Calu3 (cell line): ENCODE measurements at regions of chrX and their contacts with region 1.

Region 1: GRCh38 chrX:17046478-17047097 is 100.1 kb downstream of the REPS2 start:
- DNase-seq: peak; percentile 74
- H3K4me3 Mint-ChIP-seq: no peak overlapping the region
- H3K27ac Mint-ChIP-seq: no peak overlapping the region
- H3K4me1 Mint-ChIP-seq: no peaks in the 10 kb centered on the region
- H3K27me3 Mint-ChIP-seq: no peaks in the 10 kb centered on the region
- CTCF ChIP-seq: peak; percentile 65

Region 2: GRCh38 chrX:16836371-16836770 is 210.2 kb before region 1 on chrX:
- CTCF ChIA-PET with region 1: interaction called, 3 read pairs
- intact Hi-C with region 1: loop called (anchors 5 kb)
- DNase-seq: peak; percentile 57
- H3K4me3 Mint-ChIP-seq: no peak overlapping the region
- H3K27ac Mint-ChIP-seq: peak overlapping the region; percentile 50
- H3K4me1 Mint-ChIP-seq: peaks cover 12% of the 10 kb centered on the region
- H3K27me3 Mint-ChIP-seq: no peaks in the 10 kb centered on the region
- CTCF ChIP-seq: peak; percentile 65

Region 3: GRCh38 chrX:16855363-16856075 is 191.1 kb before region 1 on chrX:
- CTCF ChIA-PET with region 1: interaction called, 11 read pairs
- intact Hi-C with region 1: no loop called
- DNase-seq: no peak
- H3K4me3 Mint-ChIP-seq: no peak overlapping the region
- H3K27ac Mint-ChIP-seq: no peak overlapping the region
- H3K4me1 Mint-ChIP-seq: no peaks in the 10 kb centered on the region
- H3K27me3 Mint-ChIP-seq: no peaks in the 10 kb centered on the region
- CTCF ChIP-seq: no peak

Region 4: GRCh38 chrX:16882702-16883486 is 163.7 kb before region 1 on chrX:
- CTCF ChIA-PET with region 1: interaction called, 77 read pairs
- intact Hi-C with region 1: loop called (anchors 1 kb)
- DNase-seq: peak; percentile 76
- H3K4me3 Mint-ChIP-seq: peak overlapping the region; percentile 73
- H3K27ac Mint-ChIP-seq: peak overlapping the region; percentile 50
- H3K4me1 Mint-ChIP-seq: peaks cover 9% of the 10 kb centered on the region
- H3K27me3 Mint-ChIP-seq: no peaks in the 10 kb centered on the region
- CTCF ChIP-seq: peak; percentile 50

Region 5: DNA sequence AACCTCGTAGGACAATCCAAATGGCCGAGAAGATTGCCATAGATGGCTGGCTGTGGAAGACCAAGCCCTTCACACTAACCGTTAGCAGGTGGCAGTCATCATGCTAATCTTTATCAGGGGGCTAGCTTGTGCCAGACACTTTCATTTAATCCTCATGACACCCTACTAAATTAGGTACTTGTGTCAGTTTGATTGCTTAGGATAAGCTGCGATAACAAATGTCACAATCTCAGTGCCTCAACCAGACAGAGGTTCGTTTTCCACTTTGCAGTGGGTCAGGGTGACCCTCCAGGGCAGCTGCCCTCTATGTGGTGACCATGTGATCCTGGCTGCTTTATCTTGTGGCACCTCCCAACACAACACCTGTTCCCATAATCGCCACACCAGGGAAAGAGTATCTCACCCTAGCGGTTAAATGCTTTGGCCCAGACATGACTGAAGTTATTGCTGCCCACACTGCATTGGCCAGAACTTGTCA is 39.3 kb before region 1 on chrX:
- CTCF ChIA-PET with region 1: interaction called, 11 read pairs
- intact Hi-C with region 1: loop called (anchors 1 kb)
- DNase-seq: peak; percentile 41
- H3K4me3 Mint-ChIP-seq: no peak overlapping the region
- H3K27ac Mint-ChIP-seq: no peak overlapping the region
- H3K4me1 Mint-ChIP-seq: peaks cover 39% of the 10 kb centered on the region
- H3K27me3 Mint-ChIP-seq: no peaks in the 10 kb centered on the region
- CTCF ChIP-seq: peak; percentile 36